H1 (cell line): ENCODE measurements at regions of chr12 and their contacts with region 1.

Region 1: DNA sequence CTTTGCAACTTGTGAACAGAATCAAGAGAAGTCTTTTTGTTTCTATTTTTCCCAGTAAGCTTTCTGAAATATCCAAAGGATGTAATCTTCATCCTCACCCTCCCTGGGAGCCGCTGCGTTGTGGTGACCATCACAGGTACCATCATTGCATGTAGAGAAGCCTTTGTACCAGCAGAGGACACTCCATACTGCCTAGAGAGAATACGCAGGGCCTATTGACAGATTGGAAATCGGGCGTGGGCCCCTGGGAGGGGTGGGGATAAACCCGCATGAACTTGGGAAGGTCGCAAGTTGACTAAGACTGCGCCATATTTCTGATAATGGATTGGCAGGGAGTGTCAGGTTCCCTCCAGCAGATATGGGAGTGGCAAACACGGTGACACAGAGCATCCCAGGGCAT is 12.7 kb downstream of the KRT1 start:
- DNase-seq: no peak
- H3K4me3 ChIP-seq: no peak overlapping the region
- H3K27ac ChIP-seq: no peak overlapping the region
- H3K4me1 ChIP-seq: no peaks in the 10 kb centered on the region
- H3K27me3 ChIP-seq: no peaks in the 10 kb centered on the region; a peak in 1 of 7 replicates
- CTCF ChIP-seq: peak; percentile 28 to 64 (median 63)
- EP300 ChIP-seq: no peak
- POLR2A ChIP-seq: no peak
- RAD21 ChIP-seq: peak; percentile 79 to 80

Region 2: GRCh38 chr12:52655720-52656124 is 11.8 kb before region 1 on chr12:
- CTCF ChIA-PET with region 1: interaction called, 18 read pairs
- POLR2A ChIA-PET with region 1: no interaction called
- DNase-seq: no peak
- H3K4me3 ChIP-seq: no peak overlapping the region
- H3K27ac ChIP-seq: no peak overlapping the region
- H3K4me1 ChIP-seq: no peaks in the 10 kb centered on the region
- H3K27me3 ChIP-seq: no peaks in the 10 kb centered on the region
- CTCF ChIP-seq: no peak
- EP300 ChIP-seq: no peak
- POLR2A ChIP-seq: no peak
- RAD21 ChIP-seq: no peak

Region 3: DNA sequence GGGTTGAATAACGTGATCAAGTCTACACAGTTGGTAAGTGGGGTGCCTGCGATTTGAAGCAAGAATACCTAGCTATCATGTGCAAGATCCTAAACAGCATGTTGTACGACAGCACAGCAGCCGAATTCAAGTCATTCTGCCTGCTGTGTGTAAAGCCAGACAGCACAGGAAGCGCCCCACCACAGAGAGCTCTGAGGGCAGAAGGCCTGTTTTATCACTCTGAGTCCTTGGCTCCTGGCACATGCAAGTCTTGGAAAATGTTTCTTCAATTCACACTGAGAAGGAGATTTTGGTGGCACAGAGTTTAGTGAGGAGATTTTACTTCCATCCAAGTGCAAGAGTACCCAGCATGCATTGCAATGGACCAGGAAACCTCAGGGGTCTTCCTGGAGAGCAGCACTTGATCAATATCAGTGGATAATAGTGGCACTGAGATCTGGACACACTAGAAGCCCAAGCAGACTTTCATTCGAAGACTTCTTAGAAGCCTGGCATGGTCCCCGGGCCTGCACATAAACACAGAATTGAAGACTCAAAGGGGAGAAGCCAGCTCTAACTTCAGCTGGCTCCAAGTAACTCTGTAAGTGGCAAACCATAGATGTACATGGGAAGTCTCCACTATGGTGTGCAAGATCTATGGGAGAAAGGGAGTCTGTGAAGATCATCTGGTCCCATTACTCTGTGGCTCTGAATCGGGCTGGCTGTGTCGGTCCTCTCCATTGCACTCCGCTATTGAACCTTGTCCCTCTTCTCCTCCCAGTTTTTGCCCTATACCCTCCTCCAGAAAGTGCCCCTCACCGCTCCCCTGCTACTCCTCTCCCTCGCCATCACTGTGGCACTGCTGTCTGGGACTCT is 14.2 kb after region 1 on chr12:
- CTCF ChIA-PET with region 1: interaction called, 16 read pairs
- POLR2A ChIA-PET with region 1: no interaction called
- DNase-seq: no peak
- H3K4me3 ChIP-seq: no peak overlapping the region
- H3K27ac ChIP-seq: no peak overlapping the region
- H3K4me1 ChIP-seq: no peaks in the 10 kb centered on the region
- H3K27me3 ChIP-seq: no peaks in the 10 kb centered on the region
- CTCF ChIP-seq: no peak
- EP300 ChIP-seq: no peak
- POLR2A ChIP-seq: no peak
- RAD21 ChIP-seq: no peak

Region 4: DNA sequence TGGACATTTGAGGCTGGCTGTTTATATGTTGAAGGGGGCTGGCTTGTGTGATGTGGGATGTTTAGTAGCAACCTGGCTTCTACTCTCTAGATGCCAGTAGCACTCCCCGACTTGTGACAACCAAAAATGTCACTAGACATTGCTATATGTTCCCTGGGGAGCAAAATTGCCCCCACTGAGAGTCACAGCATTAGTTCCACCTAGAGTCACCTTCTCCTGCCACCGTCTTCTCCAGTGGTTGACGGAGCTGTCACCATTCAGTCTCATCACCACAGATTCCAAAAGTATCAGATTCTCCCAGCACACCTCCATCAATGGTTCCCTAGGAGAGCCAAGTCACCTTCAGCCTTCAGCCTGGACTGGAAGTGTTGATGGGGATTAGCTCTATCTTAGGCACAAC is 117.4 kb after region 1 on chr12:
- CTCF ChIA-PET with region 1: no interaction called
- POLR2A ChIA-PET with region 1: no interaction called
- DNase-seq: no peak
- H3K4me3 ChIP-seq: no peak overlapping the region
- H3K27ac ChIP-seq: no peak overlapping the region
- H3K4me1 ChIP-seq: no peaks in the 10 kb centered on the region
- H3K27me3 ChIP-seq: no peaks in the 10 kb centered on the region
- CTCF ChIP-seq: no peak
- EP300 ChIP-seq: no peak
- POLR2A ChIP-seq: no peak
- RAD21 ChIP-seq: no peak

Region 5: GRCh38 chr12:52870351-52871290 is 203.1 kb after region 1 on chr12:
- CTCF ChIA-PET with region 1: interaction called, 22 read pairs
- POLR2A ChIA-PET with region 1: no interaction called
- DNase-seq: peak in 1 of 2 experiments; percentile 98
- H3K4me3 ChIP-seq: no peak overlapping the region
- H3K27ac ChIP-seq: no peak overlapping the region
- H3K4me1 ChIP-seq: no peaks in the 10 kb centered on the region; a peak in 4 of 7 replicates
- H3K27me3 ChIP-seq: peaks cover 0 to 22% (median 12%) of the 10 kb centered on the region in 4 experiments; a peak in 5 of 7 replicates
- CTCF ChIP-seq: peak; percentile 86 to 98 (median 90)
- EP300 ChIP-seq: no peak
- POLR2A ChIP-seq: no peak
- RAD21 ChIP-seq: peak; percentile 96 to 98